Activated CD4-positive, alpha-beta T cell treated with anti-CD3 and anti-CD28 coated beads, Interleukin-2, amount 10 ng/mL, durations not matched to agents 24 days and 14 days (primary cell): ENCODE measurements at regions of chr1 and their contacts with region 1.

Region 1: GRCh38 chr1:27321813-27322577 is at the start of gene TMEM222:
- DNase-seq: peak; percentile 99
- H3K4me3 Mint-ChIP-seq: peak within 1 kb of the TSS; percentile 97
- H3K27ac Mint-ChIP-seq: peak within 1 kb of the TSS; percentile 93
- H3K4me1 Mint-ChIP-seq: peaks cover 29% of the 10 kb centered on the region
- H3K27me3 Mint-ChIP-seq: peaks cover 5% of the 10 kb centered on the region
- total RNA-seq, gene TMEM222: 39.6 and 41.4 TPM in 2 replicates

Region 2: DNA sequence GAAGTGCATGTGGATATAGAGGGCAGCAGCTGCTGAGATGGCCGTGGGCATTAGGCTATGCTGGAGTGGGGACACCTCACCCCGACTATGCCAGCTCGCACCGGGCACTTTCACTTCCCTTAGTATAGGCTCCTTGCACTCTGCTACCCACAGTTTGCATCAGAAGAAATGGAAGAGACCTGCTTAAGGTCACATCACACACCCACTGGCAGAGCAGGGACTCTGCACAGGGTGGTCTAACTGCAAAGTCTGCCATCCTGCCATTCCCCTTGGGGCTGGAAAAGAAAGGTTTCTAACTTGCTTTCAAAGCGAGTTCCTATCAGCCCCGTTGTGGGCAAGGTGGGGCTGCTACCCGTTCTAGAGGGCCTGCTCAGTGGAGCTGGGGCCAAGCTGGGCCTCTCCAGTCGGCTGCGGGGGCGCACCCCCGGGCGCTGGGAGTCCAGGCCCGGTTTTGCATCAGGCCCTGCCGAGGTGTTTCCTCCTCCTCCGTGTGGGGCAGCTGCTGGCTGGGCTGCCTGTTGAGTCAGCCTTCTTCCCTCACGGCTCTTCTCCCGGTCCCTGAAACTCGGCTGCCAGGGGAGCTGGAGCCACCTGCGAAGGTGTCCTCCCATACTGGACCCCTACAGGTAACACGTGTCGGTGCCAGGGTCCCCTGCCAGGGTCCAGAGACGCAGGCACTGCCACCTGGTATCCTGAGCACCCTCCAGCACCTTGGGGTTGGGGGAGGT is 19.7 kb after region 1 on chr1 and contains the start of gene SYTL1:
- intact Hi-C with region 1: loop called (anchors 1 kb)
- DNase-seq: peak; percentile 90
- H3K4me3 Mint-ChIP-seq: peak within 1 kb of the TSS; percentile 86
- H3K27ac Mint-ChIP-seq: peak within 1 kb of the TSS; percentile 87
- H3K4me1 Mint-ChIP-seq: peaks cover 59% of the 10 kb centered on the region
- H3K27me3 Mint-ChIP-seq: no peaks in the 10 kb centered on the region
- total RNA-seq, gene SYTL1: 29.7 and 29.8 TPM in 2 replicates

Region 3: GRCh38 chr1:27365372-27366112 is 43.5 kb after region 1 on chr1:
- intact Hi-C with region 1: loop called (anchors 2 kb)
- DNase-seq: peak; percentile 90
- H3K4me3 Mint-ChIP-seq: peak overlapping the region; percentile 92
- H3K27ac Mint-ChIP-seq: peak overlapping the region; percentile 90
- H3K4me1 Mint-ChIP-seq: peaks cover 38% of the 10 kb centered on the region
- H3K27me3 Mint-ChIP-seq: no peaks in the 10 kb centered on the region

Region 4: DNA sequence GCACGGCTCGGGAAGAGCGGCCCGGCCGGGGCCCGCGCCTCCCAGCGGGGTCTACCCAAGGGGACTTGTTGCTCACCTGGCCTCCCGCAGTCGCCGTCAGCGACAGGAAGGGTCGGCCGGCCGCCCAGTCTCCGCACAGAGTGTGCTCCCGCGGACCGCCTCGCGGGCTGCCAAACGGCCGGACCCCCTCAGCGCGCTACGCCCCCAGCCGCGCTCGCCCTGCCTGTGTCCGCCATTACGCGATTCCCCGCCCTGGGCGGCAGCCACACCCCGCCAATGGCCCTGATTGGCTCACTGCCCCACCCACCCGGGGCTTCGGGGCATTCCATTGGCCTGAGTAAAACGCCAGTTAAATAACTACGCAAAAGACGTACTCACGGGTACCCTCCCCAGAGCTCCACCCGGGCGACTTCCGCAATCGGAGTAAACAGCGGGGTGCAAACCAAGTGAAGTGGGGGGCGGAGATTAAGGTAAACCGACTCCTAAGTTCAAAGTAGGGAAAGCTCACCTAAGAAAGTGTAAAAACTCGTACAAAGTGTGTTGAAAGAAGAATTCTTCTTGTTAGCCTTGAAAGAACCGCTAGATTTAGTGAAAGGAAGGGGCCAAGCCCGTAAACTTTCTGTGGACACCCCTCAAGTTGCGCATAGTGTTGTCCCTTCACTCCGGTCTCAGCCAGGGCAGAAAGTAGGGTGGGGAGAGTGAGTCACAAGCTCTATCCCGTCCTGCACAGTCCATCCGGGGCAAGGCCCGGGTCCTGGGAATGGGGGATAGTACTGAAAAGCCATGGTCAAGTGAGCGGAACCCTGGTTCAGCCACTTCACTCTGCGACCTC is 168.1 kb after region 1 on chr1 and contains the start of gene WASF2:
- intact Hi-C with region 1: loop called (anchors 5 kb)
- DNase-seq: peak; percentile 99
- H3K4me3 Mint-ChIP-seq: peak within 1 kb of the TSS; percentile 89
- H3K27ac Mint-ChIP-seq: peak within 1 kb of the TSS; percentile 99
- H3K4me1 Mint-ChIP-seq: peaks cover 25% of the 10 kb centered on the region
- H3K27me3 Mint-ChIP-seq: no peaks in the 10 kb centered on the region
- total RNA-seq, gene WASF2: 109 TPM in 2 replicates